Panc1 (cell line): ENCODE measurements at regions of chr10 and their contacts with region 1.

Region 1: GRCh38 chr10:117386805-117387204 is 11.6 kb upstream of the PDZD8 start:
- DNase-seq: no peak
- ATAC-seq: no peak
- H3K4me3 ChIP-seq: no peak overlapping the region
- H3K27ac ChIP-seq: no peak overlapping the region
- H3K4me1 ChIP-seq: no peaks in the 10 kb centered on the region
- H3K27me3 ChIP-seq: peaks cover 28% of the 10 kb centered on the region
- CTCF ChIP-seq: no peak

Region 2: GRCh38 chr10:117198088-117198487 is 188.7 kb before region 1 on chr10:
- CTCF ChIA-PET with region 1: no interaction called
- POLR2A ChIA-PET with region 1: no interaction called
- in situ Hi-C with region 1: no loop called
- intact Hi-C with region 1: no loop called
- DNase-seq: no peak
- ATAC-seq: no peak
- H3K4me3 ChIP-seq: no peak overlapping the region
- H3K27ac ChIP-seq: no peak overlapping the region
- H3K4me1 ChIP-seq: no peaks in the 10 kb centered on the region
- H3K27me3 ChIP-seq: no peaks in the 10 kb centered on the region; the same call in 1 of the 2 replicates
- CTCF ChIP-seq: no peak

Region 3: DNA sequence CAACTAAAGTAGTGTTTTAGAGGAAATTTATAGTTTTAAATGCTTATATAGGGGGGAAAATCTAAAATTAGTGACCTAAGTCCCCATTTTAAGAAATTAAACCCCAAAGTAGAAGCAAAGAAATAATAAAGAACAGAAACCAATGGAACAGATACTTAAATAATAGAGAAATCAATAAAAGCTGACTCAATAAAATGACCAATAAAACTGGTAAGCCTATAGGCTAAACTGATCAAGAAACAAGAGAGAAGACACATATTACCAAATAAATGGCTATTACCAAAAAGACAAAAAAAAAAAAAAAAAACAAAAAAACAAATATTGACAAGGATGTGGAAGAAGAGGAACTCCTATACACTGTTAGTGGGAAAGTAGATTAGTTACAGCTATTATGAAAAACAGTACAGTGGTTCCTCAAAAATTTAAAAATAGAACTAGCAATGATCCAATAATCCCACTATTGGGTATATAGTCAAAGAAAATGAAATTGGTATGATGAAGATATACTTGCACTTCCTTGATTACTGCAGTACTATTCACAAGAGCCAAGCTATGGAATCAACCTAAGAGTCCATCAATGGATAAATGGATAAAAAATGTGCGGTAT is 92.7 kb before region 1 on chr10:
- CTCF ChIA-PET with region 1: no interaction called
- POLR2A ChIA-PET with region 1: no interaction called
- in situ Hi-C with region 1: no loop called
- intact Hi-C with region 1: no loop called
- DNase-seq: no peak
- ATAC-seq: no peak
- H3K4me3 ChIP-seq: no peak overlapping the region
- H3K27ac ChIP-seq: no peak overlapping the region
- H3K4me1 ChIP-seq: no peaks in the 10 kb centered on the region
- H3K27me3 ChIP-seq: no peaks in the 10 kb centered on the region
- CTCF ChIP-seq: no peak

Region 4: GRCh38 chr10:117429643-117430265 is 42.9 kb after region 1 on chr10:
- CTCF ChIA-PET with region 1: no interaction called
- POLR2A ChIA-PET with region 1: interaction called, 10 read pairs
- in situ Hi-C with region 1: no loop called
- intact Hi-C with region 1: no loop called
- DNase-seq: no peak
- ATAC-seq: no peak
- H3K4me3 ChIP-seq: no peak overlapping the region
- H3K27ac ChIP-seq: no peak overlapping the region
- H3K4me1 ChIP-seq: no peaks in the 10 kb centered on the region
- H3K27me3 ChIP-seq: no peaks in the 10 kb centered on the region; the same call in 1 of the 2 replicates
- CTCF ChIP-seq: no peak